ENCODE measurements at regions of chr15 and their contacts with region 1.

Region 1: DNA sequence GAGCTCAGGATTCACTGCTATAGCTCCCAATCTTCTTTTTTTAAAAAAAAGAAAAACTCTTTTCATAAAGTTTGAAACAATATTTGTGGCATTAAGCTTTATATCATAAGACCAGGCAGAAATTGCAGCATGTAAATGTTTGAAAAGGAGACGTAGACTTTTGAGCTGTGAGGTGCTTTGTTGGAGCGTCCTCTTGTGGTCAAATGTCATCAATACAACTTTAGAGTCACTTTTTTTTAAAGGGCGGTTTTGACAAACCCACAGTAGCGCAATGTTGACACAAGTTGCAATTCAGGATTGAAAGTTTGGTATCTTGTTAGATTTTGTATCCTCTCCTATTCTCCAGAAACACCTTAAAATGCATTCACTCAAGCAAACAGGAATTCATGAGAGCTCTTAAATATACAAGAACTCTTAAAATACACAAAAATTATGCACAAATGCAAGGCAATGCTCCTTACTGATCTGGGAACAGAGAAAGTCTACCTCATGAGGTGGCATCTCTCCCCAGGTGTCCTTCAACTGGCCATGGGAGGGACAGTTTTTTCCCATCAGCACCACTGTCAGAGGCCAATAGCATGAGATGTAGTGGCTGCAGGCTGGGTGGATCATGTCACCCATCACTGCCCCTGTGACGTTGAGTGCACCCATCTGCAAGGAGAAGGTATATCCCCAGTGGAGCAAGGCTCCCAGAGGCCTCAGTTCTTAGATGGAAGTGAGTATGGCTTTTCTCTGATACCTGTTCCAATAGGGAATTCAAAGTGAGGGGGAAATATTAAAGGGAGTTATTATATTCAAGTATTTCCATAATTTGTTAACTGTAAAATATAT is 70.7 kb downstream of the ANXA2 start:
- DNase-seq: peak; percentile 54
- H3K4me3 Mint-ChIP-seq: no peak overlapping the region
- H3K27ac Mint-ChIP-seq: no peak overlapping the region
- H3K4me1 Mint-ChIP-seq: peaks cover 2% of the 10 kb centered on the region
- H3K27me3 Mint-ChIP-seq: peaks cover 20% of the 10 kb centered on the region

Region 2: GRCh38 chr15:59741274-59741906 is 585.6 kb before region 1 on chr15:
- CTCF ChIA-PET with region 1: interaction called, 8 read pairs
- intact Hi-C with region 1: loop called (anchors 5 kb)
- DNase-seq: peak; percentile 10
- H3K4me3 Mint-ChIP-seq: no peak overlapping the region
- H3K27ac Mint-ChIP-seq: no peak overlapping the region
- H3K4me1 Mint-ChIP-seq: no peaks in the 10 kb centered on the region
- H3K27me3 Mint-ChIP-seq: peaks cover 7% of the 10 kb centered on the region

Region 3: DNA sequence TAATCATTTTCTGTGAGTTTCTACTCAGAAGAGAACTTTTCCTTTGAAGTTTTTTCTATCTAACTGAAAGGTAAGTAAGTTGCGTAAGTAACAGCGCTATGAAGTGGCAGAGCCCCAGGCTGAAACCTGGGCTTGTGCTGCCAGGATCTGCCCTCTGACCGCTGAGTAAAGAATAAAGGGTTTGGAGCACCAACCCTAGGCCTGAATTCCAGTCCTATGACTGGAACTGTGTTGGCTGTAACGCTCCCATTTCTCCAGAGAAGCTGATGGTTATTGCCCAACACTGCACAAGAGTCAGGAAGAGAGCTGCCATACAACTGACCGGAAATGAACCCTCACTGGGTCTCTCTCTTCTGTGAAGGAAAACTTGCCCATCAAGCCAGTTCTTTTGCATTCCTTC is 235.9 kb before region 1 on chr15:
- CTCF ChIA-PET with region 1: no interaction called
- intact Hi-C with region 1: no loop called
- DNase-seq: no peak
- H3K4me3 Mint-ChIP-seq: no peak overlapping the region
- H3K27ac Mint-ChIP-seq: no peak overlapping the region
- H3K4me1 Mint-ChIP-seq: no peaks in the 10 kb centered on the region
- H3K27me3 Mint-ChIP-seq: peaks cover 7% of the 10 kb centered on the region

Region 4: GRCh38 chr15:60137711-60138396 is 189.2 kb before region 1 on chr15:
- CTCF ChIA-PET with region 1: no interaction called
- intact Hi-C with region 1: no loop called
- DNase-seq: no peak
- H3K4me3 Mint-ChIP-seq: no peak overlapping the region
- H3K27ac Mint-ChIP-seq: no peak overlapping the region
- H3K4me1 Mint-ChIP-seq: no peaks in the 10 kb centered on the region
- H3K27me3 Mint-ChIP-seq: peaks cover 8% of the 10 kb centered on the region

Region 5: DNA sequence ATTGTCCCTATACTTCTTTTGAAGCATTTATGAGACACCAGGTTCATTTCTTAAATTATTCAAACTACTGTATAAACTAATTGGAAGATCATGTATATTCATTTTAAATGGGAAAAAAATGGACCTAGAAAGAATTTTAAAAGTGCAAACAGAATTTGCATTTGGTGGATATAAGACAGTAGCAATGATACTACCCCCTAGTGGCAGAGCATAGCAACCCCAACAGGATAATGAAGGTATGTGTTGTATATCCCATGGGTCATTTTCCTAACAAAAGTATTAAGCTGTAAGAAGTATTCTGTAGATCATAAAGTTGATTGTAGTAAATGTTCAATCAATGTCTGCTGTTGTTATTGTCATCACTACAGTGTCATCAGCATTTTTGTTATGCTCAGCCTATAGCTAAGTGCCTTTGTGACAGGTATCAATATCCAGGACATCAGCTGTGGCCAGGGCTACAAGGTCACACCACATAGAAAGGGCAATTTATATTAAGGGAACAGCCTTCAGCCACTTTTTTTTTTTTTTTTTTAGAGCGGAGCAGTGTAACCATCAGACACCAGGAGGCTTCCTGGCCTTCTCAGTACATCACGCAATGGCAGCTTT is 147.2 kb before region 1 on chr15:
- CTCF ChIA-PET with region 1: interaction called, 5 read pairs
- intact Hi-C with region 1: loop called (anchors 2 kb)
- DNase-seq: peak; percentile 49
- H3K4me3 Mint-ChIP-seq: no peak overlapping the region
- H3K27ac Mint-ChIP-seq: no peak overlapping the region
- H3K4me1 Mint-ChIP-seq: no peaks in the 10 kb centered on the region
- H3K27me3 Mint-ChIP-seq: peaks cover under 1% of the 10 kb centered on the region